Right cardiac atrium (tissue), 5 donors: ENCODE measurements at regions of chr5 and their contacts with region 1.

Region 1: DNA sequence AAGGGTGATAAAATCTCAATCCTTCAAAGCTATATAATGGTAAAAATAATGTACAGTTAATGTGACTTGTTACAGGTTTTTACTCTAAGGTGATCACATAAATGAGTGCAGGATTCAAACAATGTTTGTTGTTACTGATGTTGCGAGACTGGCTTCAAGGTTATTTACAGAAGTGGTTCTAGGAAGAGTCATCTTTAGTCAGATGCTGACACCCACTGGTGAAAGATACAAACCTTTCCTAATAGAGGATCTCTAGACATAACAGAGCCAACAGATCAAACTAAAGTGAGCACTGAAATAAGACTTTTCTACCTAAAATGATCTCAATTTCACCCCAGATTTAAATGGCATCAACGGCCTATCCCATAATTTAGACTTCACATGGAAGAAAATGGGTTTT is 20.2 kb downstream of the ARSB start:
- DNase-seq: no peak
- ATAC-seq: peak; percentile 82 to 83
- H3K4me3 ChIP-seq: no peak overlapping the region
- H3K27ac ChIP-seq: no peak overlapping the region
- H3K4me1 ChIP-seq: no peaks in the 10 kb centered on the region
- H3K27me3 ChIP-seq: no peaks in the 10 kb centered on the region

Region 2: GRCh38 chr5:78320401-78320800 is 644.5 kb before region 1 on chr5:
- intact Hi-C with region 1: loop called in 2 of 4 experiments (anchors 5 to 10 kb)
- DNase-seq: no peak
- ATAC-seq: no peak
- H3K4me3 ChIP-seq: no peak overlapping the region
- H3K27ac ChIP-seq: no peak overlapping the region
- H3K4me1 ChIP-seq: no peaks in the 10 kb centered on the region
- H3K27me3 ChIP-seq: no peaks in the 10 kb centered on the region

Region 3: GRCh38 chr5:78467752-78468357 is 497.0 kb before region 1 on chr5:
- intact Hi-C with region 1: loop called in 1 of 4 experiments (anchors 10 kb)
- DNase-seq: no peak
- ATAC-seq: peak; percentile 40 to 67
- H3K4me3 ChIP-seq: no peak overlapping the region
- H3K27ac ChIP-seq: no peak overlapping the region
- H3K4me1 ChIP-seq: no peaks in the 10 kb centered on the region
- H3K27me3 ChIP-seq: no peaks in the 10 kb centered on the region

Region 4: GRCh38 chr5:78537821-78538220 is 427.1 kb before region 1 on chr5:
- intact Hi-C with region 1: loop called in 3 of 4 experiments (anchors 5 to 10 kb)
- DNase-seq: no peak
- ATAC-seq: peak; percentile 71 to 73
- H3K4me3 ChIP-seq: no peak overlapping the region
- H3K27ac ChIP-seq: no peak overlapping the region
- H3K4me1 ChIP-seq: peaks cover 9% of the 10 kb centered on the region
- H3K27me3 ChIP-seq: no peaks in the 10 kb centered on the region

Region 5: DNA sequence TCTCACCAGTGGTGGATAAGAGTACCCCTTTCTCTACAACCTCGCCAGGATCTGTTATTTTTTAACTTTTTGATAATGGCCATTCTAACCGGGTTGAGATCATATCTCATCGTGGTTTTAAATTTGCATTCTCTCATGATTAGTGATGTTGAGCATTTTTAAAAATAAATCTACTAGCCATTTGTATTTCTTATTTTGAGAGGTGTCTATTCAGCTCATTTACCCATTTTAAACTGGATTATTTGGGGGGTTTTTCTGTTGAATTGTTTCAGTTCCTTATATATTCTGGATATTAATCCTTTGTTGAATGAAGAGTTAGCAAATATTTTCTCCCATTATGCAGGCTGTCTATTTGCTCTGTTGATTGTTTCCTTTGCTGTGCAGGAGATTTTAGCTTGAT is 119.4 kb before region 1 on chr5:
- intact Hi-C with region 1: no loop called
- DNase-seq: no peak
- ATAC-seq: no peak
- H3K4me3 ChIP-seq: no peak overlapping the region
- H3K27ac ChIP-seq: no peak overlapping the region
- H3K4me1 ChIP-seq: no peaks in the 10 kb centered on the region
- H3K27me3 ChIP-seq: no peaks in the 10 kb centered on the region

Region 6: DNA sequence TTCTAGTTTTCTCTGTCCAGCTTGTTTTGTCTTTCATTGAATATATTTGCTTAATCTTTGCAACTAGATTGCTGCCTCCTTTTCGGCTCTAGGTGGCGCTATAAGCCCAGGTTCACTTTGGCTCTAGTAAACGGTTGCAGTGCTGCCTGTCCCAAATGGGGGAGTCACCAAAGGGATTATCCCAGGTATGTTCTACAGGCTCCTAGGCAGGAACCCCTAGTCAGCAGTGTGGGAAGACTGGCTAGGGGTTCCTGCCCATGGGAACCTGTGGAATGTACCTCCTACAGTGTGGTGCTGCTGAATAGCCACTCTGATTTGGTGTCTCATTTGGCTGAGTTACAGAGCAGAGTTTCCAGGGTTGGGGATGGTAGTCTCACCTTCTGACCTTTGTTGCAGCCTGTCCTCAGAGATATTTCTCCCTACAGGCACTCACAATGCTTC is 64.9 kb before region 1 on chr5:
- intact Hi-C with region 1: loop called in 2 of 4 experiments (anchors 10 kb)
- DNase-seq: peak in 1 of 3 donors; percentile 52
- ATAC-seq: no peak
- H3K4me3 ChIP-seq: no peak overlapping the region
- H3K27ac ChIP-seq: no peak overlapping the region
- H3K4me1 ChIP-seq: peaks cover 2% of the 10 kb centered on the region
- H3K27me3 ChIP-seq: no peaks in the 10 kb centered on the region

Region 7: DNA sequence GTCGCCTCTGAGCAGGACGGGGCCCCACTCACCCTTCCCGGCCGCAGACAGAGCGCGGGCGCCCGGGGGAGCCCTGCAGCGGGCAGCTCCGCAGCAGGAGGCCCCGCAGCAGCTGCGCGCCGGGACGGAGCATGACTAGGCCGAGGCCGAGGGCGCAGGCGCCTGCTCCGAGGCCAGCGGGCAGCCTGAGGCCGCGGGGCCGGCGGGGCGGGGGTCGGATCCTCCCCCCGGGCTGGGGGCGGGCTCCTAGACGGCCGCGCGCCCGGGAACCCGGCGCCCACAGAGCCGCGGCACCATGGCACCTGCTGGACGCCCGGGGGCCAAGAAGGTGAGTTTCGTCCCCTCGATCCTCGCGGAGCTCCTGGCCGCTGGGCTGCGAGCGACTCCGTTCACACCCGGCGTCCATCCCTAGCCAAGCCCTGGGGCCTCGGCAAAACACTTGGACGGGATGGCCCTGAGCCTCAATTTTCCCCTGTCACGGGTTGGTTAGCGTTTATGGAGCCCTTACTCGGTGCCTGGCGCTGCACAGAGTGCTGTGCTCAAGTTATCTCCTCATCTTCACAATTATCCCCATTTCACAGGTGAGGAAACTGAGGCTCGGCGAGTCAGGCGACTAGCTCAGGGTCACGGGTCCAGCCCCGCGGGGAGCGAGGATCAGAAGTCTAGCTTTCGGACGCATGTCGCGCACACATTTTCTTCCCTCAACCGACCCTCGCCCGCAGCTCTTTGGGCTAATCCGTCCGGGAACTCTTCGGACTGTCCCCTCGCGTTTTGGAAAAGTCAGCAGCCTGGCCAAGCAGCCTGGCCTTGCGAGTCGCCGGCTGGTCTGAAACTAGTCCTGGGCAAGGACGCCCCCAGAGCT is 104.8 kb after region 1 on chr5 and contains the starts of genes BHMT2 and DMGDH:
- intact Hi-C with region 1: no loop called
- DNase-seq: peak; percentile 43 to 82 (median 78)
- ATAC-seq: peak; percentile 94 to 95
- H3K4me3 ChIP-seq: peak within 1 kb of the TSS; percentile 42
- H3K27ac ChIP-seq: no peak within 1 kb of the TSS
- H3K4me1 ChIP-seq: no peaks in the 10 kb centered on the region
- H3K27me3 ChIP-seq: no peaks in the 10 kb centered on the region
- total RNA-seq, gene BHMT2: 16.4 to 40.3 (median 20.0) TPM
- total RNA-seq, gene DMGDH: 4.3 to 7.0 (median 5.0) TPM